ENCODE measurements at regions of chr15 and their contacts with region 1.

Region 1: DNA sequence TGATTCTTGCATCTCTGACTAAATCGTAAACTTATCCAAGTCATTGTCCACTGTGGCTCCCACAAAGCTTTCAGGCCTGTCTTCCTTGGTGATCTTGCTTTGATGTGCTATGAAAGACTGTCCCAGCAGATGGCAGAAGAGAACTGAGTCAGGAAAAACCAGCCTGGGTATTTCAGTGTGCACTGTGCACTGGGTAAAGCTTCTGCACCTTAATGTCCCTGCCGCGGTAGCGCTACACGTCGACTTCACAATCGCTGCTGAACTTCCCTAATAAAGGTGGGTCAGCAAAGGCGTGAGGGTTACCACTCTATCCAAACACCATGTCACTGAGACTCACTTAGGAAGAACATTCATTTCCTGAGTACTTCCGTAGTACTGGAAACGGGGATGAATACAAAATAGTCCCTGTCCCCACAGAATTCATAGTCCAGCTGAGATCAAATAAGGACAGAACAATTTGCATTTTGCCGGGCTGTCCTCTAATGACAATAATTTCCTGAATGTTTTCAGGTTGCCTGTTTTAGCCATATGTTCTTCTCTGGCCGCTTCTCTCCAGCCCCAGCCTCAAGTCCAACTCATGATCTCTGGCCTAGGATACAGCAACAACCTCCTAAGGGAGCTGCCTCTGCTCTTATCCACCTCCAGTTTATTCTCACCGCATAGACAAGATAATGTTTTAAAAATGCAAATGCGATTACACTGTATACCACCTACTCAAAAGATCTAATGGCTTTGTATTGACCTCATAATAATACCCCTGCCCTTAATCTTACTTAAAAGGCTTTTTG is 83.6 kb upstream of the AKAP13 start:
- DNase-seq: peak in 8 of 10 donors; percentile 36 to 66 (median 52)
- H3K4me3 ChIP-seq: peak overlapping the region in 53 of 59 donors; percentile 2 to 61 (median 42)
- H3K27ac ChIP-seq: no peak overlapping the region
- H3K27me3 ChIP-seq: peaks cover 0 to 4% (median 0%) of the 10 kb centered on the region in 45 donors
- CTCF ChIP-seq: peak; percentile 37 to 86 (median 74)

Region 2: GRCh38 chr15:85003593-85004312 is 293.1 kb before region 1 on chr15:
- intact Hi-C with region 1: no loop called
- DNase-seq: no peak
- H3K4me3 ChIP-seq: no peak overlapping the region
- H3K27ac ChIP-seq: peak overlapping the region in 36 of 59 donors; percentile 0 to 67 (median 35)
- H3K27me3 ChIP-seq: no peaks in the 10 kb centered on the region
- CTCF ChIP-seq: no peak

Region 3: GRCh38 chr15:85380217-85380811 is 83.5 kb after region 1 on chr15 and contains the start of gene AKAP13:
- intact Hi-C with region 1: no loop called
- DNase-seq: peak; percentile 45 to 93 (median 88)
- H3K4me3 ChIP-seq: peak within 1 kb of the TSS; percentile 41 to 76 (median 63)
- H3K27ac ChIP-seq: peak within 1 kb of the TSS in 48 of 59 donors; percentile 2 to 89 (median 62)
- H3K27me3 ChIP-seq: peaks cover 0 to 51% (median 6%) of the 10 kb centered on the region in 45 donors
- CTCF ChIP-seq: peak in 1 of 56 donors; percentile 7
- total RNA-seq, gene AKAP13: 42.6 to 104 (median 65.3) TPM

Region 4: DNA sequence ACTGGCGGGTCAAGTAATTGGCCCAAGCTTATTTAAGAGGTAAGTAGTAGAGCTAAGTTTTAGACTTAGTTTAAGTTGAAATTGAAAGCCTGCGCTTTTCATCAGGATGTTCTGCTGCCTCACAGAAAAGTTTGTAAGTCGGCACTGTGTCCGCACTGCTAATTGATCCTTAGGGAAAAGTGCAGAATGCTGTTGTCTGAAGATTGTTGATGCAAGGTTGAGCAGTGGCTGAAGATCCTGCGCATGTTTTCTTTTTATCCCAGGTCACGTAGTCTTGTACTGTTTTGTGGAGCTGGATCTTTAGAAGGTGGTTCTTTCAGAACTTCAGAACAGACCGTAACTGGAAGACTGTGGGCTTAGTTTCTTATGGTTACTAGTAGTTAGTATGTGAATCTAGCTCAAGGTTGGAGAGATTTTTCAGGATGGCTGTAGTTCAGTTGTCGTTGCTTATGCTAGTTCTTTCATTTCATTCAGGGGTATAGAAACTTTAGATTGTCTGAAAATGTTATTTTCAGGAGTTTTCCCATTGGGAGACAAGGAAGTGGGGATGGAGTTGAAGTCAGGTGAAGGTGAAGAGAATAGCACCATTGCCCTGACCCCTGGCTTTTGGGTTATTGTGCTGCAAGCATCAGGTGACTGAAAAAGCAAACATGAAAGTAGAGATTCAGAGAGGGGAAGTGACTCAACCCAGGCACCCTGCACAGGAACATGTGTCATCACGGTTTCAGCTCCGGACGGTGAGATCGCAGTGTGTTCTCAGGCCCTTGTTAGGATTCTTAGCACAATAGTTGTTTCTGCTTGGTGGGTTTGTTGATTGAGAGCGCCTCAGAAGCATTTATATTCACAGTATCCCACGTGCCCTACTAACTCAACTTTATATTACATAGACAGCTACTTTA is 116.4 kb after region 1 on chr15:
- intact Hi-C with region 1: loop called in 1 of 2 experiments (anchors 10 kb)
- DNase-seq: peak in 5 of 10 donors; percentile 5 to 41 (median 33)
- H3K4me3 ChIP-seq: peak overlapping the region in 2 of 59 donors; percentile 4 to 7
- H3K27ac ChIP-seq: peak overlapping the region in 3 of 59 donors; percentile 0 to 44 (median 18)
- H3K27me3 ChIP-seq: no peaks in the 10 kb centered on the region
- CTCF ChIP-seq: peak in 2 of 56 donors; percentile 21 to 31

Region 5: GRCh38 chr15:85482894-85483293 is 186.1 kb after region 1 on chr15:
- intact Hi-C with region 1: no loop called
- DNase-seq: no peak
- H3K4me3 ChIP-seq: no peak overlapping the region
- H3K27ac ChIP-seq: no peak overlapping the region
- H3K27me3 ChIP-seq: peaks cover 0 to 5% (median 0%) of the 10 kb centered on the region in 45 donors
- CTCF ChIP-seq: no peak

Measured in dorsolateral prefrontal cortex (tissue), 120 donors.